ENCODE measurements at regions of chr19 and their contacts with region 1.

Region 1: DNA sequence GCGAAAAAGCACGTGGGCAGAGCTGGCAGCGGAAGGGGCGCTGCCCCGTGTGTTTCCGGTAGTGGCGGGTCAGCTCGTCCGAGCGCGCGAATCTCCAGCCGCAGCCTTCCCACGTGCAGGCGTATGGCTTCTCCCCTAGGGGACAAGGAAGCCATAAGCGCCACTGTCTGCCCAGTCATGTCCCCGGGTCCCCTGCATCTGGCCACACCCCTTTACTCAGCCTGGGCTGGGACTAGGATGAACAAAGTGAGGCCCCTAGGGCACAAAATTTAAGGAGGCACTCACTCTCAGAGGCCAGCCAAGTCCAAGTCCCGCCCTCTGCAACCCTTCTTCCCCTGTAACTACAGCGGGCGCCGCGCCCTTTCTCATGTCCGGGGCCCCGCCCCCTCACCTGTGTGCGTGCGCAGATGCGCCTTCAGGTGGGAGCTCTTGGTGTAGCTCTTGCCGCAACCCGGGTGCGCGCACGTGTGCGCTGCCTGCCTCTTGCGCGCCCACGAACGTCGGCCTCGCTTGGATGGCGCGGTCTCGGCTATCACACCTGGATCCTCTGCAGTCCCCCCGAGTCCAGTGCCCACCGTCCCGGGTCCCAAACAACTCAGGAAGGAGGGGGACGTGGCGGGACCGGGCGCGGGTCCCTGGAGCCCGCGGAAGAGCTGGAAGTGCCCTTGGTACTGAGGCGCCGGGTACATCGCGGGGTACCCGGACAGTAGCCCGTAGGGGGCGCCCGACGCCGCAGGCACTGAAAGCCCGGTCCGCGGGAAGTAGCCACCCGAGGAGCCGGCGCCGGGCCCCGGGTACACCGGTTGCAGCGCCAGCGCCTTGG is 1.9 kb downstream of the KLF1 start:
- DNase-seq: peak; percentile 91

Region 2: DNA sequence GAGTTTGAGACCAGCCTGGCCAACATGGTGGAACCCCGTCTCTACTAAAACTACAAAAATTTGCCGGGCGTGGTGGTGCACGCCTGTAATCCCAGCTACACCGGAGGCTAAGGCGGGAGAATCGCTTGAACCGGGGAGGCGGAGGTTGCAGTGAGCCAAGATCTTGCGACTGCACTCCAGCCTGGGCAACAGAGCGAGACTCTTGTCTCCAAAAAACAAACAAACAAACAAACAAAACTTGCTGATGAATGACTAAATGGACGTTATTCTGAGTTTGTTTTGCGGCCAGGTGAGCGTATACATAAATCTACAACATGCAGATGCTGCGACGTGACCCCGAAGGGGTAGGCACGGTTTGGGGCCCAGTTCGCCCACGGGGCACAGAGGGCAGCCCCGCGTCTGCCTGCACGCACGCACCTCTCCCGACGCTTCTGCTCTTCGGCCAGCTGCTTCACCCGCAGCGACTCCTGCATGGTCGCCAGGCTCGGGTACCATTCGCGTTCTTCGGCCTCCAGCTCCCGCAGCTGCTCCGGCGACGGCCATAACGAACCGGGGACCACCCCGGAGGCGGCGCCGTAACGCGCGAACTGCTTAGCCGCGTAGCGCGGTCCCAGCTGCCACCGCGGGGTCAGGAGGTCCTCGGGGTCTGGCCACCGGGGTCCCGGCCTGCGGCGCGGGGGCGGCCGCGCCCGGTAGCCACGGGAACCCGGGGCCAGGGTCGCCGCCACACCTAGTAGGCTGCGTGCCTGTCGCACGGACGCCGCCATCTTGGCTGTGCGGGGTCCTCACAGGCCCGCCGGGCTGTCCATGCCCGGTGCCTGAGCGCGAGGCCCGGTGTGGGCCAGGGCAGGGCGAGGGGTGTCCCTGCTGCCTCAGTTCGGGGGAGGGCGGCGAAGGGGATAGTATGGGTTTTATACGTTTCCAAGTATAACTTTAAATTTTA is 71.6 kb after region 1 on chr19 and contains the start of gene GADD45GIP1:
- intact Hi-C with region 1: loop called (anchors 5 kb)
- DNase-seq: peak; percentile 90
- total RNA-seq, gene GADD45GIP1: 23.5 TPM